ENCODE measurements at regions of chr11 and their contacts with region 1.

Region 1: DNA sequence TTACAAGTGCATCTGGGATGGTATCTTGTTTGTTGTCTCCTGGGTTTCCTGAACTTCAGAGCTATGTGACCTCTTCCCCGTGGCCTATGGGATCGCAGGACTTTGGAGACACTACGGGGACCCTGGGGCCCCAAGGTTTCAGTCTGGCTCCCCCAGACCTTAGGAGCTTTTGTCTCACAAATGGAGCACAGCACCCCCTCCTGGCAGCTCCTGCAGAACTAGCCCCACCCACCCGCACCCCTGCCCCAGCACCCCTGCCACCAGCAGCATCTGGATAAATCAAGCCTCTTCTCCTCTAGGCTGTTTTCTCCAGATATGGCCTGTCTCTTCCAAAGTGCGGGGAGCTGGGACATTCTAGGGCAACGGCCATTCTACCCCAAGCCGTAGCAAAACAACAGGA is 10.4 kb downstream of the RCOR2 start:
- DNase-seq: peak; percentile 75
- H3K4me3 Mint-ChIP-seq: no peak overlapping the region
- H3K27ac Mint-ChIP-seq: no peak overlapping the region
- H3K4me1 Mint-ChIP-seq: peaks cover 6% of the 10 kb centered on the region
- H3K27me3 Mint-ChIP-seq: no peaks in the 10 kb centered on the region

Region 2: DNA sequence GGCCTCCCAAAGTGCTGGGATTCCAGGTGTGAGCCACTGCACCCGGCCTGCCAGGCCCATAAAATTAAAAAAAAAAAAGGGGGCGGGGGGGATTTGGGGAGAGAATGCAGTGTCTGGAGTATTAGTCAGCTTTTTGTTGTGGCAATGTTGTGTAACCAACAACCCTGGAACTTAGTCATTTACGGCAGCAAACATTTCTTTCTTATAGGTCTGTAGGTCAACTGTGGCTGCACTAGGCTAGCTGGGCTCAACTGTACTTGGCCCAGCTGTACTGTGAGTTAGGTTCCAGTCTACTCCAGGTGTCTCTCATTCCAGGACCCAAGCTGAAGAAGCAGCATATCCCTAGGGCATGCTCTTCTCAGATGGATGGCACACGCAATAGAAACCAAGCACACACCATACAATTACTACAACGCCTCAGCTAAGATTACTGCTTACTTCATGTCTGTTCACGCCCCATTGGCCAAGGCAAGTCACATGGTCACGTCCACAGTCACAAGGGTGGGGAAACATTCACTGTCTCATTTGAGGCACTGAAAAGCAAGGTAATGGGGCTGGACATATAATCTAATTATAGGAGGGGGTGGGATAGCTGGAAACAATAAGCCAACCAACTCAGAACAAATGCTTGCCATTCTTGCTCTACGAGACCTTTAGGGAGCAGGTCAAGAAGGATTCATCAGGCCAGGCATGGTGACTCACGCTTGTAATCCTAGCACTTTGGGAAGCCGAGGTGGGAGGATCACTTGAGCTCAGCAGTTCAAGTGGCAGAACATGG is 103.8 kb before region 1 on chr11:
- CTCF ChIA-PET with region 1: no interaction called
- DNase-seq: no peak
- H3K4me3 Mint-ChIP-seq: no peak overlapping the region
- H3K27ac Mint-ChIP-seq: no peak overlapping the region
- H3K4me1 Mint-ChIP-seq: no peaks in the 10 kb centered on the region
- H3K27me3 Mint-ChIP-seq: peaks cover 16% of the 10 kb centered on the region

Region 3: GRCh38 chr11:63829823-63830489 is 76.6 kb before region 1 on chr11:
- CTCF ChIA-PET with region 1: interaction called, 45 read pairs
- DNase-seq: no peak
- H3K4me3 Mint-ChIP-seq: no peak overlapping the region
- H3K27ac Mint-ChIP-seq: no peak overlapping the region
- H3K4me1 Mint-ChIP-seq: peaks cover 5% of the 10 kb centered on the region
- H3K27me3 Mint-ChIP-seq: no peaks in the 10 kb centered on the region

Measured in activated naive CD4-positive, alpha-beta T cell treated with anti-CD3 and anti-CD28 coated beads, Interleukin-2, amount 10 ng/mL, durations not matched to agents 7 days and 5 days (primary cell).